Activated B cell treated with CpG ODN at 0.5 μM for 24 hours (primary cell): ENCODE measurements at regions of chr14 and their contacts with region 1.

Region 1: GRCh38 chr14:24695265-24696241 is 61.6 kb upstream of the GZMB start:
- DNase-seq: no peak
- ATAC-seq: peak; percentile 59
- H3K4me3 Mint-ChIP-seq: no peak overlapping the region
- H3K27ac Mint-ChIP-seq: no peak overlapping the region
- H3K4me1 Mint-ChIP-seq: peaks cover 32% of the 10 kb centered on the region
- H3K27me3 Mint-ChIP-seq: no peaks in the 10 kb centered on the region
- CTCF ChIP-seq: no peak

Region 2: DNA sequence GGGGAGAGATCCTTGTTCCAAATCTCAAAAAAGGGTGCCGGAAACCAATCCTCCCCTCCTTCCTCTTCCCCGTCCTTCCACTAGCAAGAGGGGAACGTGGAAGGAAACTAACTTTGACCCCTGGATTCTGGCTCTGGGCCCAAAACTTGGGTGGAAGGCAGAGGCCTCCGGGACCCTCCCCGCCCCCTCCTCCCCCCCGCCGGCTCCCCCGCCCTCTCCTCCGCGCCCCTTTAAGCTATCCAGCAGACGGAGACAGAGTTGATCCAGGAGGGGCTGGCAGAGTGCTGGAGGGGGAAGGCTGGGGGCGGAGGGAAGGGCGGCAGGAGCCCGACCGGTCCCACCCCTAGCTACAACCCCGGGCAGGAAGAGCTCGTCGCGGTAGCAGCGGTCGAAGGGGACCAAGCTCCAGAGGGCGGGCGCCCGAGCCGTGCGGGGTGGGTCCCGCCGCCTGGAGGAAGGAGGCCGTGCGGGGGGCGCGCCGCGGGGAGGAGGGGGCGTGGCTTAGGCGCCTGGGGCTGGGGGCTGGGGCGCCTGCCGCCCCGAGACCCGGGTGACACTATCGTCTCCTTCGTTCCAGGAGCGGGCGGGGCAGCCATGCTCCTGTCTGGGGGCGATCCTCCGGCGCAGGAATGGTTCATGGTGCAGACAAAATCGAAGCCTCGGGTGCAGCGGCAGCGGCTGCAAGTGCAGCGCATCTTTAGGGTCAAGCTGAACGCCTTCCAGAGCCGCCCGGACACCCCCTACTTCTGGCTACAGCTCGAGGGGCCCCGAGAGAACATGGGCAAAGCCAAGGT is 296.7 kb before region 1 on chr14 and contains the start of gene NYNRIN:
- CTCF ChIA-PET with region 1: no interaction called
- POLR2A ChIA-PET with region 1: no interaction called
- intact Hi-C with region 1: no loop called
- DNase-seq: peak; percentile 30
- ATAC-seq: peak; percentile 89
- H3K4me3 Mint-ChIP-seq: peak within 1 kb of the TSS; percentile 71
- H3K27ac Mint-ChIP-seq: no peak within 1 kb of the TSS
- H3K4me1 Mint-ChIP-seq: peaks cover 11% of the 10 kb centered on the region
- H3K27me3 Mint-ChIP-seq: peaks cover 30% of the 10 kb centered on the region
- CTCF ChIP-seq: no peak
- total RNA-seq, gene NYNRIN: 0.02 and 0.04 TPM in 2 replicates

Region 3: GRCh38 chr14:24630872-24631477 is 64.6 kb before region 1 on chr14:
- CTCF ChIA-PET with region 1: no interaction called
- POLR2A ChIA-PET with region 1: no interaction called
- intact Hi-C with region 1: no loop called
- DNase-seq: no peak
- ATAC-seq: no peak
- H3K4me3 Mint-ChIP-seq: no peak overlapping the region
- H3K27ac Mint-ChIP-seq: no peak overlapping the region
- H3K4me1 Mint-ChIP-seq: no peaks in the 10 kb centered on the region
- H3K27me3 Mint-ChIP-seq: no peaks in the 10 kb centered on the region
- CTCF ChIP-seq: no peak

Region 4: DNA sequence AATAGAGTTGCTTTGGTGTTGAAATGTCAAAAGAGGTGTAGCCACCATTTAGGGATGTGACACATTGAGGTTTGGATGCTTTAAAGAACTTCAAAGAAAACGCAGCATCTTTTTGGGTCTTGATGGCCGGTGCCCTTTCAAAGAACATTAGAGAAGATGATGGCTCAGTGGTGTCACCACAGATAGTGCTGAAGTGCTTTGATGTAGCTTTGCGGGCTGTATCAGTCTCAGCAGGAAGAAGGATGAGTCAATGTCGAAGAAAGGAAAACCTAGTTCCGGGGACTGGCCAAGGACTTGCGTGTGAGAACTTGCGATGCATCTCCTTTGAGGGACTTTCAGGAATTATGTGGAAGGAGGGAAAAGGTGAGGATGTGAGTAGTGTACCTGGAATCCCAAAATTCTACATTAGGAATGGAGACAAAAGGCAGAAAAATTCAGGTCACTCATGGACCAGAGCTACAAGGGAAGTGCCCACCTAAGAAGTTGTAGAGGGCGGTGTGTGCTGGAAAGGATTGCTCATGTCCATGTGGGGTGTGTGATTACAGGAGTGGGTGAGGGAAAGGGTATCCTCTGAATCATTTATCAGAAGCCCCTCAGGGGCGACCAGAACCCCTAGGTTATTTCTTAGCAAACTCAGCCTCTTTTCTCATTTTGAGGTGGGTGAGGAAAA is 21.9 kb before region 1 on chr14:
- CTCF ChIA-PET with region 1: no interaction called
- POLR2A ChIA-PET with region 1: interaction called, 4 read pairs
- intact Hi-C with region 1: loop called (anchors 1 kb)
- DNase-seq: no peak
- ATAC-seq: peak; percentile 64
- H3K4me3 Mint-ChIP-seq: peak overlapping the region; percentile 82
- H3K27ac Mint-ChIP-seq: peak overlapping the region; percentile 95
- H3K4me1 Mint-ChIP-seq: peaks cover 72% of the 10 kb centered on the region
- H3K27me3 Mint-ChIP-seq: no peaks in the 10 kb centered on the region
- CTCF ChIP-seq: no peak

Region 5: DNA sequence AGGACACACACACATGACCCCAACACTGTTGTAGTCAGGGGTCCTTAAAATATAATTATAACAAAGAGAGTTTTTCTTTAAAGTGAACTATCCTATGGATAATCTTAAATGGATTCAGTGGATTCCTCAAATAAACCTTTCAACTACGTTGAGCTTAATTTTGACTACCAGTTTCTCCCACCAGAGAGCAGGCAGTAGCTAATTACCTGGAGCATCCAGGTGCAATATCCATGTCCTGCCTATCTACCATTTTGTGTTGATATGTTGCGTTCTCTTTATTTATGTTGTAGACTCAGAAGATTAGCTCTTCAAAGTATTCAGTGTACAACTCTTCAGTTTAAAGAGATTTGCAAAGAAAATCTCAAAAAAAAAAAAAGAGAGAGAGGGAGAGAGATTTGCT is 65.6 kb after region 1 on chr14:
- CTCF ChIA-PET with region 1: no interaction called
- POLR2A ChIA-PET with region 1: no interaction called
- intact Hi-C with region 1: no loop called
- DNase-seq: no peak
- ATAC-seq: no peak
- H3K4me3 Mint-ChIP-seq: no peak overlapping the region
- H3K27ac Mint-ChIP-seq: no peak overlapping the region
- H3K4me1 Mint-ChIP-seq: no peaks in the 10 kb centered on the region
- H3K27me3 Mint-ChIP-seq: peaks cover 18% of the 10 kb centered on the region
- CTCF ChIP-seq: no peak

Region 6: GRCh38 chr14:25237845-25238244 is 542.3 kb after region 1 on chr14:
- CTCF ChIA-PET with region 1: no interaction called
- POLR2A ChIA-PET with region 1: no interaction called
- intact Hi-C with region 1: no loop called
- DNase-seq: no peak
- ATAC-seq: no peak
- H3K4me3 Mint-ChIP-seq: no peak overlapping the region
- H3K27ac Mint-ChIP-seq: no peak overlapping the region
- H3K4me1 Mint-ChIP-seq: no peaks in the 10 kb centered on the region
- H3K27me3 Mint-ChIP-seq: no peaks in the 10 kb centered on the region
- CTCF ChIP-seq: no peak